Mammary epithelial cell (primary cell): ENCODE measurements at regions of chr3 and their contacts with region 1.

Region 1: GRCh38 chr3:48918388-48919214 is at the start of gene ARIH2:
- DNase-seq: peak; percentile 90
- H3K4me3 ChIP-seq: peak within 1 kb of the TSS; percentile 64 to 98 (median 76)
- H3K27ac ChIP-seq: peak within 1 kb of the TSS; percentile 90
- H3K4me1 ChIP-seq: peaks cover 18% of the 10 kb centered on the region
- H3K27me3 ChIP-seq: no peaks in the 10 kb centered on the region
- CTCF ChIP-seq: peak in 1 of 2 donors; percentile 19
- total RNA-seq, gene ARIH2: 84.7 to 115 TPM

Region 2: GRCh38 chr3:48543271-48543866 is 375.2 kb before region 1 on chr3:
- CTCF ChIA-PET with region 1: no interaction called
- dilution Hi-C with region 1: no loop called
- in situ Hi-C with region 1: no loop called
- intact Hi-C with region 1: no loop called
- DNase-seq: no peak
- H3K4me3 ChIP-seq: no peak overlapping the region
- H3K27ac ChIP-seq: no peak overlapping the region
- H3K4me1 ChIP-seq: no peaks in the 10 kb centered on the region
- H3K27me3 ChIP-seq: no peaks in the 10 kb centered on the region
- CTCF ChIP-seq: no peak

Region 3: GRCh38 chr3:48573973-48574585 is 344.5 kb before region 1 on chr3:
- CTCF ChIA-PET with region 1: no interaction called
- dilution Hi-C with region 1: no loop called
- in situ Hi-C with region 1: no loop called
- intact Hi-C with region 1: no loop called
- DNase-seq: no peak
- H3K4me3 ChIP-seq: no peak overlapping the region
- H3K27ac ChIP-seq: no peak overlapping the region
- H3K4me1 ChIP-seq: no peaks in the 10 kb centered on the region
- H3K27me3 ChIP-seq: no peaks in the 10 kb centered on the region
- CTCF ChIP-seq: no peak

Region 4: DNA sequence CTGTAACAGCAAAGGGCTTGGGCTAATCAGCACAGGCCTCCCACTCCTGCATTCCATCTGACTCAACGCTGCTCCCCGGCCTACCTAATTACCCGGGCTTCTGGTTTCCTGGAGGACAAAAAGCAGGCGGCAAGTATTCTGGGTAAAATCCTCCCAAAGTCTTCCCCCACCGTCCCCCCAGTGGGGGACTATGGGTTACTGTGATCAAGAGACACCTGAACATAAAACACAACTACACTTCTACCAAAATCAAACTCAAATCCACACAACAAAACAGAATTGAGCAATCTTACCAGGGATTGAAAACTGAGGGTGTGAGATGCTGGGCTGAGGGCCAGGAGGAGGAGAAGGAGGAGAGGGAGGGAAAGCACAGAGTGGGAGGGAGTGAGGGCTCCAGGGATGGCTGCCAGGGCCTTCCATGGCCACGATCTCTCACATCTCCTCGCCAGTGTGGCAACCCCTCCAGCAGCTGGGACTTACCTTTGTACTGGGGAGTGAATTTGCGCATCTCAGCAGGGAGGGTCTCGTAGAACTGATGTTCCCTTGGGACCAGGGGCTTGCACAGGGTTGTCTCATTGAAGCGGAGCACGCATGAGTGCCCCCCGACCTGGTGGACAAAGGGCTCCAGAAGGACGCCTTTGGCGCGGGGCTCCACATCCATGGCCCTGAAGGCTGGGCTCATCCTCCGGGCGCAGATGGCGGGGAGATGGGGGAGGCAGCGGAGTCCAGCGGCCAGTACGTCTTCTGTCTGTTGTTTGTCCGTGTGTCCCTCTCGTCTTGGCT is 223.8 kb before region 1 on chr3:
- CTCF ChIA-PET with region 1: no interaction called
- dilution Hi-C with region 1: no loop called
- in situ Hi-C with region 1: no loop called
- intact Hi-C with region 1: loop called (anchors 5 kb)
- DNase-seq: peak; percentile 85
- H3K4me3 ChIP-seq: peak overlapping the region in 2 of 3 experiments; percentile 30 to 37
- H3K27ac ChIP-seq: peak overlapping the region; percentile 81
- H3K4me1 ChIP-seq: peaks cover 43% of the 10 kb centered on the region
- H3K27me3 ChIP-seq: no peaks in the 10 kb centered on the region
- CTCF ChIP-seq: no peak

Region 5: DNA sequence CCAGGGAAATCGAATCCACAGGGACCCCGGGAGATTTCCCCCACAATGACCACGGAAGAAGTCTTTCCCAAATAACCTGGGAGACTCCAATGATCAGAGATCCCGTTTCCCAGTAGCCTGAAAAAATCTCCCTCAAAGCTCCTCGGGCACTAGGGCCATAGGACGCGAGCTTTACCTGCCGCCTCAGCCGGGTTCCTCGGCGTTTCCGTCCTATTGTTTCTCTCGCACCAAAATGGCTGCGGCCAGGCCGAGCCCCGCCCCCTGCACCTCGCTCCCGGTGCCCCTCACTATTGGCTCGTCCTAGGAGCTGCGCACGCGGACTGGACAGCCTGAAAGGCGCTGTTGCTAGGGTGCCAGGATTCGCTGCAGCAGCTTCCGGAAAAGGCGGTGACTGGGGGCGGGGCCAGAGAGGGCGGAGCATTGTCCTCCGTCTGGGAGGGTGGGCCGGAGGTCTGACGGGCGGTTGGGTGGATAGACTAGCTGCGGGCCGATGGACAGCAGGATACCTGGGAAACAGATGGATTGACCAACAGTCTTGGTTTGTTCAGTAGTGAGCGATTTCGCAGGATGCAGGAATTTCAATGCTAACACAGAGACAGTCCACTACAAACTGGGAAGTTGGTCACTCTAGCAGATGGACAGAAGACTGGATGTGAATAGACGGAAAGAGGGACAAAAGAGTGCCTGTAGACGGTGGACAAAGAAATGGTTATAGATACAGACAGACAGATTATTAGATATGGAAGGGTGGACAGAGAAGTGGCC is 201.4 kb before region 1 on chr3 and contains the start of gene IP6K2:
- CTCF ChIA-PET with region 1: no interaction called
- dilution Hi-C with region 1: no loop called
- in situ Hi-C with region 1: no loop called
- intact Hi-C with region 1: loop called (anchors 10 kb)
- DNase-seq: peak; percentile 96
- H3K4me3 ChIP-seq: peak within 1 kb of the TSS; percentile 68 to 93 (median 76)
- H3K27ac ChIP-seq: peak within 1 kb of the TSS; percentile 94
- H3K4me1 ChIP-seq: peaks cover 28% of the 10 kb centered on the region
- H3K27me3 ChIP-seq: no peaks in the 10 kb centered on the region
- CTCF ChIP-seq: no peak
- total RNA-seq, gene IP6K2: 62.7 to 95.8 TPM

Region 6: GRCh38 chr3:48784426-48785120 is 134.0 kb before region 1 on chr3:
- CTCF ChIA-PET with region 1: no interaction called
- dilution Hi-C with region 1: no loop called
- in situ Hi-C with region 1: no loop called
- intact Hi-C with region 1: no loop called
- DNase-seq: peak; percentile 16
- H3K4me3 ChIP-seq: no peak overlapping the region
- H3K27ac ChIP-seq: peak overlapping the region; percentile 17
- H3K4me1 ChIP-seq: no peaks in the 10 kb centered on the region
- H3K27me3 ChIP-seq: no peaks in the 10 kb centered on the region
- CTCF ChIP-seq: no peak

Region 7: DNA sequence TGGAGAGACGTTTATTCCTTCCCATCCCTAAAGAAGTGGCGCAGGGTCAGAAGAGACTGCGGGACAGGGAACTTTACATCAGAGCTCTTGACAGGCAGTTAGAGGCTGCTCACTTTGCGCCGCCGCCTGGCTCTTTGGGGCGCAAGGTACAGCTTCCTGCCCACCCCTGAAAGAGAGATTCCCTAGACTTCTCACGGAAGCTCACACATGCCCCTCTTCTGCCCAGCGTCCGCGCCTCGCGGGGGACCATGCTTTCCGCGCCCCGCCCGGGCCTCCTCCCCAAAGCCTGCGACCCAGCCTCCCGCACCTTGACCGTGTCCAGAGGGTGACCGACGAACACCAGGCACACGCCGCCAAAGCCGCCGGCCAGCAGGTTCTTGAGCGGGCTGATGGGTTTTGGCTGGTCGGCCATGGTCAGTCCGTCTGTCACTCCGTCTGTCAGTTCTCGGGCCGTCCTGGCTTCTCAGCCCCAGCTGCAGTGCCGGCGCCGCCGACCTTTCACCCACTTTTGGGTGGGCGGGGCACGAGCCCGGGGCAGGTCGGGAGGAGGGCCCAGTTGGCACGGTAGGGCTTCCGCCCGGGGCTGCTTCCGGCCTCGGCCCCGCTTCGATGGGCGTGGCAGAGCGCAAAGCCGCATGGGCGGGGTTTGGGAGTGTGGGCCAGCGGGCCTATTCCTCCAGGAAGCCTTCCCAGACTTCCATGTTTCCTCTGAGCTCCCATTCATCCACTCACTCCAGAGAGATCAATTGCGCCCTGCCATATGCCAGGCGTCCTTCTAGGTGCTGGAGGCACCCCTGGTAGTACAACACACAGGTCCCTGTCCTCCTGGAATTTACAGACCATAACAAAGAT is 20.0 kb before region 1 on chr3 and contains the start of gene SLC25A20:
- CTCF ChIA-PET with region 1: no interaction called
- dilution Hi-C with region 1: no loop called
- in situ Hi-C with region 1: no loop called
- intact Hi-C with region 1: loop called (anchors 2 kb)
- DNase-seq: peak; percentile 86
- H3K4me3 ChIP-seq: peak within 1 kb of the TSS; percentile 53 to 75 (median 71)
- H3K27ac ChIP-seq: no peak within 1 kb of the TSS
- H3K4me1 ChIP-seq: peaks cover 14% of the 10 kb centered on the region
- H3K27me3 ChIP-seq: no peaks in the 10 kb centered on the region
- CTCF ChIP-seq: peak in 1 of 2 donors; percentile 13
- total RNA-seq, gene SLC25A20: 11.3 to 17.8 TPM